ENCODE measurements at regions of chr13 and their contacts with region 1.

Region 1: GRCh38 chr13:48233046-48233907 is at the start of gene ITM2B:
- DNase-seq: peak; percentile 15
- H3K4me3 ChIP-seq: peak within 1 kb of the TSS; percentile 59 to 99 (median 87)
- H3K27ac ChIP-seq: peak within 1 kb of the TSS; percentile 89 to 100 (median 99)
- H3K4me1 ChIP-seq: peaks cover 29 to 57% (median 37%) of the 10 kb centered on the region in 3 donors
- H3K27me3 ChIP-seq: no peaks in the 10 kb centered on the region
- CTCF ChIP-seq: peak in 5 of 6 experiments; percentile 10 to 46 (median 44)
- POLR2A ChIP-seq: peak in 2 of 4 donors; percentile 87 to 95
- total RNA-seq, gene ITM2B: 418 to 554 (median 457) TPM

Region 2: GRCh38 chr13:48126944-48127830 is 106.1 kb before region 1 on chr13:
- intact Hi-C with region 1: loop called (anchors 10 kb)
- DNase-seq: no peak
- H3K4me3 ChIP-seq: no peak overlapping the region
- H3K27ac ChIP-seq: peak overlapping the region; percentile 43 to 88 (median 80)
- H3K4me1 ChIP-seq: peaks cover 12 to 54% (median 30%) of the 10 kb centered on the region in 3 donors
- H3K27me3 ChIP-seq: no peaks in the 10 kb centered on the region
- CTCF ChIP-seq: peak; percentile 80 to 90 (median 84)
- POLR2A ChIP-seq: no peak

Region 3: DNA sequence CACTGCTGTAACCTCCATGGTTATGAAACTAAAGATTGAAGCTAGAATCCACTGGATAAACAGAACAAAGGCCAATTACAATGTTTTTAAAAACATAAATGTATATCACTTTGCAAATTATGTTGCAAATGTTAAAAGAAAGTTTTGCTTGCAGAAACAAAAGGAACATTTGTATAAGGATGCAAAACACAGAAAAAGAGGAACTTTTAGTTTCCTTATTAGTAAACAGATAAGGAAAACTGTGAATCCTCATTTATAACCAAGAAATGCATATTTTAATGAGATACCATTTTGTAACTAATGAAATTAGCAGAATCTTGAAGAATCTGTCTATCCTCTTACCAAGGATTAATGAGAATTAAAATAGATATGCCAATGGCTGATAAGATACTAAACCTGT is 147.3 kb after region 1 on chr13:
- intact Hi-C with region 1: no loop called
- DNase-seq: no peak
- H3K4me3 ChIP-seq: no peak overlapping the region
- H3K27ac ChIP-seq: no peak overlapping the region
- H3K4me1 ChIP-seq: no peaks in the 10 kb centered on the region
- H3K27me3 ChIP-seq: no peaks in the 10 kb centered on the region
- CTCF ChIP-seq: no peak
- POLR2A ChIP-seq: no peak